Dorsolateral prefrontal cortex (tissue), 120 donors: ENCODE measurements at regions of chr22 and their contacts with region 1.

Region 1: DNA sequence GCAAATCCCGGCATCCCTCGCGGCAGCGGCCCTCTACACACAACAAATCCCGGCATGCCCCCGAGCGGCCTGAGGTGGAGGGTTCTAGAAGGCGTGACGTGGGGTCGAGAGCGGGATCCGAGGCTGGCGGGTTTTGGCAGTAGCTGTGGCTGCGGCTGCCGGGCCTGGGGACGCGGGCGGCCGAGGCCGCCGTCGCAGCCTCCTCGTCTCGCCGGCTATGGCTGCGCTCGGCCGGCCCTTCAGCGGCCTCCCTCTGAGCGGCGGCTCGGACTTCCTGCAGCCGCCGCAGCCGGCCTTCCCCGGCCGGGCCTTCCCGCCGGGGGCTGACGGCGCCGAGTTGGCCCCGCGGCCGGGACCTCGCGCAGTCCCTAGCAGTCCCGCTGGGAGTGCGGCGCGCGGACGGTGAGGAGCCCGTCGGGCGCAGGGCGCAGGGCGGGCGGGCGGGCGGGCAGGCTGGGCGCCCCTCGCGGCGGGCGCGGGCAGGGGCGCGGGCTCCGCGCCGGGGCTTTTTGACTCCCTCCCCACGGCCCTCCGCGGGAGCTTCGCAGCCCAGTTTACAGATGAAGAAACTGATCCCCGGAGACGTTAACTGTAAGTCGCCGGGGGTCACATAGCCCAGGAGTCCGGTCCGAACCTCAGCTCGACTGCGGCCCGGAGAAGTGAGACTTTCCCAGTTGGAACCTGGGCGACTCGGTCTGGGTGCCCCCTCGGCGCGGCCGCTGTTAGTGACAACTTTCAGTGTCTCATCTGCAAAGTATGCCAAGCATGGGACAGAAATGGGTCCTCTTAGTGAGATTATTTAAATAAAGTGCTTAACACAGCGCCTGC is at the start of gene CCDC117:
- DNase-seq: peak; percentile 96 to 97 (median 96)
- H3K4me3 ChIP-seq: peak within 1 kb of the TSS; percentile 54 to 95 (median 82)
- H3K27ac ChIP-seq: peak within 1 kb of the TSS; percentile 84 to 100 (median 98)
- H3K27me3 ChIP-seq: no peaks in the 10 kb centered on the region
- CTCF ChIP-seq: peak in 23 of 56 donors; percentile 4 to 51 (median 23)
- total RNA-seq, gene CCDC117: 10.6 to 35.3 (median 16.8) TPM

Region 2: DNA sequence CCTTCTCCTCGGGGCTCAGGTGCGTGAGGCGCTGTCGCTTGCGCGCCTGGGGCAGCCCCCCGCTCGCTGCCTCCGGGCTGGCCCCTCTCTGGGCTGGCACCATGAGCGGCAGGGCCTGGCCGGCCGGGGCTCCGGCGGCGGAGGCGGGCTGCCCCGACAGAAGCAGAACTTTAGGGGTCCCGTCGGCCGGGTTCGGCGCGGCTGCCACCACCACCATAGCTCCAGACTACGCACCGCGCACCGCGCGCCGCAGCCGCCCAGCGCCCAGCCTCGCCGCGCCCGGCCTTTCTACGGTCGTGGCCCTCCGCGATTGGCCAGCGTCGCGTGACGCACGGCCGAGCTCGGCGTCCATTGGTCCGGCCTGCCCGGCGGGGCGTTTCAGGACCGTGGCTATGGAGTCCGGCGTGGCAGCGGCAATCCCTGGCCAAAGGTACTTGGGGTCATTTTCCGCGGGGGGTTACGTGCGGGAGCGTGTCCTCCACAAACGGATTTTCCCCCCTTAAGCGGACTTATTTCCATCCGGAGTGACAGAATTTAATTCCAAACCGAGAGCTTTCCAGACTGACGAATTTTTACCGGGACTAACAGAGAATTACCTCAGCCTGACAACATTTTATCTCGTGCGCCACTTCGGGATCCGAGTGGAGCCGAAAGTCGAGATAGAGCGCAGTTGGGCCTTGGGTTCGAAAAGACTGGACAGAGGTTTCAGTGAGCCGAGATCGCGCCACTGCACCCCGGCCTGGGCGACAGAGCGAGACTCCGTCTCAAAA is 27.6 kb after region 1 on chr22 and contains the start of gene XBP1:
- intact Hi-C with region 1: loop called (anchors 2 kb)
- DNase-seq: peak; percentile 91 to 98 (median 93)
- H3K4me3 ChIP-seq: peak within 1 kb of the TSS; percentile 70 to 100 (median 93)
- H3K27ac ChIP-seq: peak within 1 kb of the TSS; percentile 10 to 98 (median 92)
- H3K27me3 ChIP-seq: no peaks in the 10 kb centered on the region
- CTCF ChIP-seq: peak in 14 of 56 donors; percentile 8 to 37 (median 18)
- total RNA-seq, gene XBP1: 20.6 to 79.9 (median 35.3) TPM